ENCODE measurements at regions of chr7 and their contacts with region 1.

Region 1: GRCh38 chr7:51080622-51081269 is 235.9 kb downstream of the COBL start:
- DNase-seq: no peak
- H3K4me3 ChIP-seq: no peak overlapping the region
- H3K27ac ChIP-seq: no peak overlapping the region
- H3K4me1 ChIP-seq: no peaks in the 10 kb centered on the region
- H3K27me3 ChIP-seq: peaks cover 4% of the 10 kb centered on the region
- CTCF ChIP-seq: no peak

Region 2: DNA sequence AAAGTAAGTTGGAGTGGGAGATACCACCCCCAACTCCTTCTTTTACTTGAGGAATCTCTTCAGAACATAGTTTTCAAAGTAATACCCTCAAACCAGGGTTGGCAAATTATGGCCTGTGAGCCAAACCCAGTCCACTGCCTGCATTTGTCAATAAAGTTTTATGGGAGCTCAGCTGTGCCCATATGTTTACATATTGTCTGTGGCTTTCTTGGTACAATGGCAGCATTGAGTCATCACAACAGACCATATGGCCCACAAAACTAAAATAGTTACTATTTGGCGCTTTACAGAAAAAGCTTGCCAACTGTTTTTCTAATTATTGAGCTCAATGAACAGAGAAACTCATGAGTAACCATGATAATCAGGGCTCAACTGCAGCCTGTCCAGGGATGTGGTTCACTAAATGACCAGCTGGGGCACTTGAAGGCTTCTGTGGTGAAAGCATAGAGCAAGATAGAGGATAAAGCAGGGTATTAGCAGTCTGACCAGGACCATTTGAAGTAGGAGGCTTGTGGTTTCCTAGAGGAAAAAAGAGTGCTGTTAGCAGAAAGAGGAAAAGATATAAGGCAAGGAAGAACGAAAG is 102.0 kb before region 1 on chr7:
- CTCF ChIA-PET with region 1: no interaction called
- dilution Hi-C with region 1: no loop called
- in situ Hi-C with region 1: loop called in 1 of 2 experiments (anchors 25 kb)
- intact Hi-C with region 1: no loop called
- DNase-seq: no peak
- H3K4me3 ChIP-seq: no peak overlapping the region
- H3K27ac ChIP-seq: no peak overlapping the region
- H3K4me1 ChIP-seq: no peaks in the 10 kb centered on the region
- H3K27me3 ChIP-seq: no peaks in the 10 kb centered on the region
- CTCF ChIP-seq: peak in 1 of 2 donors; percentile 9

Measured in mammary epithelial cell (primary cell).